ENCODE measurements at regions of chr7 and their contacts with region 1.

Region 1: DNA sequence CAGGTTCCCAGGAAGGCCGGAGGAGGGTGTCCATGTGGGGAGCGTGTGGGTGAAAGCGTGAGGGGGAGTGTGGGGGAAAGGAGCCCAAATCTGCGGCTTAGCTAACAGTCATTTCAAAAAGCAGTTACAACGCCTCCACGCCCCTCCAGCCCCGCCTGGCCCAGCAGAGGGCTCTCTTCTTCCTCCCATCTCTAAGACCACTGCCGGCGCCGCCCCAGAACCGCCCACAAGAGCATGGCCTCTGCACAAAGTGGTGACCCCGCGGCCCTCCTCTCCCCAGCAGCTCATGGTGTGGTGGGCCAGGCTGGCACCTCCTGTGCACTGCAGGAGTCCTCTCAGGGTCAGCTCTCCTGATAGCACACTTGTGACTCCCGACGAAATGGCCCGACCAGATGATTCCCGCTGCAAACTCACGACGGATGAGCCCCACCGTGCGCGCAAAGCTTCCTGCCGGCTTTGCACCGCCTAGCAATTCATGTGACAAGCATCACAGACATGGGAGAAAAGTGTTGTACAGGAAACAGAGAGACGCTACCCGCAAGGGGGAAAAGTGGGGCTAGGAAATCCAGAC is 12.4 kb upstream of the HUS1 start:
- DNase-seq: peak; percentile 65 to 90 (median 80)
- ATAC-seq: peak; percentile 95 to 98 (median 98)
- H3K4me3 ChIP-seq: peak overlapping the region; percentile 54 to 69
- H3K4me3 Mint-ChIP-seq: peak overlapping the region; percentile 86 to 91 (median 87)
- H3K27ac ChIP-seq: peak overlapping the region; percentile 45
- H3K27ac Mint-ChIP-seq: peak overlapping the region; percentile 95 to 97
- H3K4me1 ChIP-seq: peaks cover 9 to 17% of the 10 kb centered on the region in 2 experiments
- H3K4me1 Mint-ChIP-seq: peaks cover 20 to 21% (median 20%) of the 10 kb centered on the region in 3 donors
- H3K27me3 ChIP-seq: no peaks in the 10 kb centered on the region
- H3K27me3 Mint-ChIP-seq: no peaks in the 10 kb centered on the region

Region 2: DNA sequence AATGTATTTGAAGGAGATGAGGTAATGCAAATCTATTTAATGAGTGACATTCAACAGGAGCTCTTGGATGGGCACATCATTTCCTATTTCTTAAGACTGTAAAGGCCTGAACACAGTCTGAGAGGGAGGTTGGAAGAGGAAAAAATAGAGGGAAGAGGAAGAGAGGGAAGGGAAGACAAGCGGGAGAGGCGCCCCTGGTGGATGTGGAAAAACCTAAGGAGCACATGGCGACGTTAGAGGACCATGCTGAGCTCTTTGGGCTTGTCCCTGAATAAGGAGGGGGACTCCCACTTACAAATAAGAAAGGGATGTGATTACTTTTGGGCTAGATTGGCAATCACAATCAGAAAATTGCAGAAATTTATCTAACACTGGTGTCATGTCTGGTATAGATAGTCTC is 17.4 kb after region 1 on chr7:
- CTCF ChIA-PET with region 1: interaction called in 1 of 2 experiments, 5 read pairs
- POLR2A ChIA-PET with region 1: interaction called in 1 of 2 experiments, 10 read pairs
- DNase-seq: no peak
- ATAC-seq: no peak
- H3K4me3 ChIP-seq: no peak overlapping the region
- H3K4me3 Mint-ChIP-seq: no peak overlapping the region
- H3K27ac ChIP-seq: no peak overlapping the region
- H3K27ac Mint-ChIP-seq: no peak overlapping the region
- H3K4me1 ChIP-seq: no peaks in the 10 kb centered on the region
- H3K4me1 Mint-ChIP-seq: no peaks in the 10 kb centered on the region
- H3K27me3 ChIP-seq: peaks cover 0 to 8% of the 10 kb centered on the region in 2 experiments
- H3K27me3 Mint-ChIP-seq: peaks cover 14 to 15% of the 10 kb centered on the region in 2 donors

Region 3: GRCh38 chr7:48035301-48035966 is 43.6 kb after region 1 on chr7 and contains the start of gene C7orf57:
- CTCF ChIA-PET with region 1: no interaction called
- POLR2A ChIA-PET with region 1: no interaction called
- DNase-seq: peak; percentile 59 to 88 (median 80)
- ATAC-seq: peak; percentile 93 to 97 (median 97)
- H3K4me3 ChIP-seq: peak within 1 kb of the TSS; percentile 54 to 82
- H3K4me3 Mint-ChIP-seq: peak within 1 kb of the TSS; percentile 77 to 86 (median 84)
- H3K27ac ChIP-seq: no peak within 1 kb of the TSS
- H3K27ac Mint-ChIP-seq: no peak within 1 kb of the TSS
- H3K4me1 ChIP-seq: peaks cover 4 to 15% of the 10 kb centered on the region in 2 experiments
- H3K4me1 Mint-ChIP-seq: peaks cover 6 to 15% (median 7%) of the 10 kb centered on the region in 3 donors
- H3K27me3 ChIP-seq: peaks cover 12 to 17% of the 10 kb centered on the region in 2 experiments
- H3K27me3 Mint-ChIP-seq: peaks cover 15 to 28% of the 10 kb centered on the region in 2 donors
- total RNA-seq, gene C7orf57: 0.18 to 2.0 (median 0.44) TPM

Region 4: DNA sequence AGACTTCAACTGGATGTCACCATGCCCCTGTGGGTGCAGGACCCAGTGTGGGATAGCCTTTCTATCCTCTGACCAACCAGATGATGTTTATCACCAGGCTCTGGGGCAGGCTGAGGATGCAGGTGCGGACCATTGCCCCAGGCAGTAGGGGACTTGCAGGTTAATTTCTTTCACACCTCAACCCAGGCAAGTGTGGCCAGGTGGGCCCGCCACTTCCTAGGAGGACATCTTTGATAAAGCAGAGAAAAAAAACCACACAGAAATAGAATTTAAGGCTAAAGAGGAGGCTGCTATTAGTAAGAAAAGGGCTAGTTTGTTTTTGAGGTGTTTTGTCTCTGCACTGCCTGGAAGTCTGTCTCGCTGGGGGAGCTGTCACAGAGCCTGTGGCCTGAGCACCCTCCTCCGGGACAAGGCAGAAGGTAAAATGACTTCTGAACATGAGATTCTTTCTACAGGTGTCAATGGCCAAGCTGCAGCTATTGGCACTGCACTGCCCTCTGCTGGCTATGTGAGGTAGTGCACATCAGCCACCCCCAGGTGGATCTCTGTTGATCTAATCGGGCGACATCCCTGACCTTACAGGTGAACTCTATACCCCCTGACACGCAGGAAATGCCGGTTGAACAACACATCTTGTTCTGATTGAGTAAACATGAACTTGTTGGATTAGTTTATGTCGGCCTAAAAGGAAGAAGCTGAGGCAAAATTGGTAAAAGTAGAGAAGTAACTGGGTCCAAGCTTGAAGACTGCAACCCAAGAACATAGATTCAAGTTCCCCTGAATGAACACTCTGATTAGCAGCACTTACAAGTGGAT is 118.2 kb after region 1 on chr7:
- CTCF ChIA-PET with region 1: interaction called, 21 to 42 read pairs
- POLR2A ChIA-PET with region 1: interaction called in 1 of 2 experiments, 4 read pairs
- DNase-seq: peak; percentile 70 to 94 (median 84)
- ATAC-seq: peak; percentile 84 to 93 (median 89)
- H3K4me3 ChIP-seq: no peak overlapping the region
- H3K4me3 Mint-ChIP-seq: peak overlapping the region in 1 of 3 donors; percentile 9
- H3K27ac ChIP-seq: peak overlapping the region; percentile 58
- H3K27ac Mint-ChIP-seq: peak overlapping the region; percentile 77 to 79
- H3K4me1 ChIP-seq: peaks cover 2 to 10% of the 10 kb centered on the region in 2 experiments
- H3K4me1 Mint-ChIP-seq: peaks cover 12 to 14% (median 14%) of the 10 kb centered on the region in 3 donors
- H3K27me3 ChIP-seq: no peaks in the 10 kb centered on the region
- H3K27me3 Mint-ChIP-seq: no peaks in the 10 kb centered on the region

Region 5: GRCh38 chr7:48298779-48299178 is 307.0 kb after region 1 on chr7:
- CTCF ChIA-PET with region 1: no interaction called
- POLR2A ChIA-PET with region 1: no interaction called
- DNase-seq: no peak
- ATAC-seq: no peak
- H3K4me3 ChIP-seq: no peak overlapping the region
- H3K4me3 Mint-ChIP-seq: no peak overlapping the region
- H3K27ac ChIP-seq: no peak overlapping the region
- H3K27ac Mint-ChIP-seq: no peak overlapping the region
- H3K4me1 ChIP-seq: no peaks in the 10 kb centered on the region
- H3K4me1 Mint-ChIP-seq: no peaks in the 10 kb centered on the region
- H3K27me3 ChIP-seq: no peaks in the 10 kb centered on the region
- H3K27me3 Mint-ChIP-seq: peaks cover 3% of the 10 kb centered on the region in 2 donors